OCI-LY7 (cell line): ENCODE measurements at regions of chr17 and their contacts with region 1.

Region 1: DNA sequence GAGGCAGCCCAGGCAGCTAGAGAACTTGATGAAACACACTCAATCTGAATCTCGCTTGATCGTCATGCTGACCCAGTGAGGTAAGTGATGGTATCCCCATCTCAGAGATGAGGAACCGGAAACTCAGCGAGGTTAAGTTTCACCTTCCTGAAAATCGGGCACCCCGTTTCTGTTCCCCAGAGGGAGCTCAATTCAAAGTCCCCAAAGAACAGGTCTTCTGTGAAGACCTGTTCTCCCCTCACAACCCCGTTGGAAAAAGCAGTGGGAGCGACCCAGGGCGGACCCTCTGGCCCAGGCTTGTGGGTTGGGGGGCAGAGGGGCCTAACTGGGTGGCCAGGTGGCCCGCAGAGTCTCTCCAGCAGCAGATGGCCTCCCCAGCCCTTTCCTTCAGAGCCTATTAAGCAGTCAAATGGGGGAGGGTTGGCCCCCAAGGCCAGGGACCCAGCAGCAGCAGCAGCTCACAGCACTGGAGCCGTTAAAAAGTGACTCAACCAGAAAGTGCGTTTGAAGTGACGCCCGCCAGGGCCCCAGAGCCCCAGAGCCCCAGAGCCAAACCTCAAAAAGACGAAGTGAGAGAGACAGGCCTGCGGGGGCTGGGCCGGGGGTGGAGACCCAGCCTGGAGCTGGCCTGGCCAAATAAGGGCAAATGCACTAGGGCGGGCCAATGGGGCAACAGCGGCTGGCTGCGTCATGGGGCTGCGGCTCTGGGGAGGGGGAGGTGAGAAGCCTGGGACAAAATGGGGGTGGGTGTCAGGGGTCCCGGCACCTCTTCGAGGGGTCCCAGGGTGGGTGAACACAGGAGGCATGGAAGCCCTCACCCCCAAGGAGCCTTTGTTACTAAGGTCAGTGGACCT is 9.2 kb upstream of the TSPOAP1 start:
- DNase-seq: peak; percentile 96
- H3K4me3 ChIP-seq: peak overlapping the region; percentile 98
- H3K27ac ChIP-seq: peak overlapping the region; percentile 99
- H3K4me1 ChIP-seq: peaks cover 94% of the 10 kb centered on the region
- CTCF ChIP-seq: no peak

Region 2: DNA sequence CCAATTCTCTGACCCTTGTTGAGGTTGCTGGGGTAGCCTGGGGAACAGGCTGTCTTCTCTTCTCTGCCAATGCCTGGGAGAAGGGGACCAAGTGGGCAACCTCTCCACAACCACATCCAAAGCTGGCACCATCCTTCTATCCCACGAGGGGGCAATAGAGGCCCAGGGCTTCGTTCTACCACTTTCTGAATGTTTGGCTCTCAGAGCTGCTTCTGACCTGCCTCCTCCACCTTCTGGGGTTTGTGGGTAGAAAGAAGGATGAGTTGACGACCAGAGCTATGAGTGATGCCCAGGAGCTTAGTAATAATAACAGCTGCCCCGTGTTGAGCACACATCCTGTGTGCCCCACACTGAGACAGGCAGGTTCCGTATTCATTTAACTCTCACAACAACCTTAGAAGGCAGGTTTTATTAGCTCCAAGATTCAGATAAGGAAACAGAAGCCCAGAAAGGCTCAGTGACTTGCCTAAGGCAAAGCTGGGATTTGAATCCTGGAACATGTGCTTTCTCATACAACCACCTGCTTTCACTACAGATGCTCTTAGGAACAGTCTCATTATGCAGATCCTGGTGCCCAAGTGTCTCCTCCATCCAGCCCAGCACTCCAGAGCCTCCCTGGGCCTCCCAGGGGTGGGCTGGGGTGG is 20.3 kb before region 1 on chr17:
- CTCF ChIA-PET with region 1: interaction called, 3 read pairs
- POLR2A ChIA-PET with region 1: interaction called, 29 read pairs
- intact Hi-C with region 1: no loop called
- DNase-seq: peak; percentile 89
- H3K4me3 ChIP-seq: no peak overlapping the region
- H3K27ac ChIP-seq: peak overlapping the region; percentile 48
- H3K4me1 ChIP-seq: peaks cover 15% of the 10 kb centered on the region
- CTCF ChIP-seq: peak; percentile 90

Region 3: GRCh38 chr17:58364270-58364942 is 26.6 kb after region 1 on chr17:
- CTCF ChIA-PET with region 1: no interaction called
- POLR2A ChIA-PET with region 1: interaction called, 20 read pairs
- intact Hi-C with region 1: loop called (anchors 2 kb)
- DNase-seq: no peak
- H3K4me3 ChIP-seq: no peak overlapping the region
- H3K27ac ChIP-seq: no peak overlapping the region
- H3K4me1 ChIP-seq: peaks cover 41% of the 10 kb centered on the region
- CTCF ChIP-seq: no peak

Region 4: GRCh38 chr17:58417300-58418092 is 79.7 kb after region 1 on chr17 and contains the start of gene RNF43:
- CTCF ChIA-PET with region 1: no interaction called
- POLR2A ChIA-PET with region 1: interaction called, 15 read pairs
- intact Hi-C with region 1: no loop called
- DNase-seq: peak; percentile 89
- H3K4me3 ChIP-seq: peak within 1 kb of the TSS; percentile 8
- H3K27ac ChIP-seq: no peak within 1 kb of the TSS
- H3K4me1 ChIP-seq: peaks cover 18% of the 10 kb centered on the region
- CTCF ChIP-seq: peak; percentile 87
- total RNA-seq, gene RNF43: 0.19 and 0.39 TPM in 2 replicates